Activated CD8-positive, alpha-beta T cell treated with anti-CD3 and anti-CD28 coated beads, Interleukin-2, amount 10 ng/mL, durations not matched to agents 7 days and 5 days (primary cell): ENCODE measurements at regions of chr21 and their contacts with region 1.

Region 1: DNA sequence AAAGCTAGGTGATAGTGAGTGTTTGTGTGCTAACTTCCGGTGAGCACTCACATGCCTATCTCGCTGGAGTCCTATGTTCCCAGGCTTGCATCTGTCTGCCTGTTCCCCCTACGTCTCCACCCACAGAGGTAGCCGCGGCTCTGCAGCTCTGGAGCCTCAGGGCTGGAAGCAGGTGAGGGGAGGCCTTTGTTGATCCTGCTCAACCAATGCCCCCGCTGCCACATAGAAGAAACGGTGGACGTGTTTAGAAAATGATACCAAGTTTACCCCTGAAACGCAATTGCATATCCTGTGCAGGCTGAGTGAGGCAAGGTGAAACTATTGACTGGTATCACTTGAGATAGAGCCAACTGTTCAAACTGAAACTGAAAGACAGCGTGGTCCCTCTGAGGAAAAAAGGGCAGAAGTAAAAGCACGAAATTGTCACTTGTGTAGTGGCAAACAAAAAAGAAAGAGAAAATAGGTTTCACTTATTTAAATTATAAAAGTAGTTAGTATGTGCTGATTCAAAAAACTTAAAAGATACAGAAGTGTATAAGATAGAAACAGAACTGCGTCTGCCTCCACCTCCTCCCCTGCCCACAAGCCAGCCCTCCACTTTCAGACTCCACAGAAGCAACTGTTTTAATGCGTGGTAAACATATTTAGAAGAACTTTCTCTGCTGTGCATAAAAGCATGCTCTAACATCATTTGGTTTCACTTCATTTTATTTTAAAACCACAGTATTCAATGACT is 38.6 kb upstream of the ETS2 start:
- DNase-seq: peak; percentile 82
- ATAC-seq: peak; percentile 96
- H3K4me3 Mint-ChIP-seq: peak overlapping the region; percentile 83
- H3K27ac Mint-ChIP-seq: peak overlapping the region; percentile 100
- H3K4me1 Mint-ChIP-seq: peaks cover 36% of the 10 kb centered on the region
- H3K27me3 Mint-ChIP-seq: no peaks in the 10 kb centered on the region

Region 2: DNA sequence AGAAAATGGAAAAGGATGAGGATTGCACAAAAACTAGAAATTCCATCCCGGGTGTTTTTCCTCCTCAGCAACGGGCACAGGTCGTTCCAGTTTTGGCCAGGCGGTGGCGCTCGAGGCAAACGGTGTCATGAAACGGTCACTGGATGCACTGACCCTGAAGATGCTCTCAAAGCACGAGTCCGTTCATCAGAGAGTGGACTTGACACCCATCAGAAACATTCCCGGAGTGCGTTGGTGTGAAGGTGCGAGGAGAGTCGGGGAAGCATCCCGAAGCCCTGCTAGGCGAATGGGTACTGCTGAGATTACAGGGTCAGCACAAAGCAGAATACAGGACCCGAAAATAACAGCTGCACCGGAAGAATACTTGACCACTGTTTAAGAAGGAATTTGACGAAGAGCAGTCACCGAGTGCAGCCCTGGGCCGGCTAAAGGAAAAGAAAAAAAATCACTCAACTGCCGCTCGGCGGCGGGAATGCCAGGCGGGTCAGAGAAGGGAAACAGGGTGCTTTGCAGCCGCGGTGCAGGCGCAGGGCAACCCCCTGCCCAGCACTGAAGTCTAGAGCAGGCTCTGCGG is 33.1 kb before region 1 on chr21:
- CTCF ChIA-PET with region 1: interaction called, 17 read pairs
- POLR2A ChIA-PET with region 1: no interaction called
- DNase-seq: peak; percentile 72
- ATAC-seq: peak; percentile 68
- H3K4me3 Mint-ChIP-seq: peak overlapping the region; percentile 61
- H3K27ac Mint-ChIP-seq: no peak overlapping the region
- H3K4me1 Mint-ChIP-seq: peaks cover 11% of the 10 kb centered on the region
- H3K27me3 Mint-ChIP-seq: peaks cover 23% of the 10 kb centered on the region

Region 3: DNA sequence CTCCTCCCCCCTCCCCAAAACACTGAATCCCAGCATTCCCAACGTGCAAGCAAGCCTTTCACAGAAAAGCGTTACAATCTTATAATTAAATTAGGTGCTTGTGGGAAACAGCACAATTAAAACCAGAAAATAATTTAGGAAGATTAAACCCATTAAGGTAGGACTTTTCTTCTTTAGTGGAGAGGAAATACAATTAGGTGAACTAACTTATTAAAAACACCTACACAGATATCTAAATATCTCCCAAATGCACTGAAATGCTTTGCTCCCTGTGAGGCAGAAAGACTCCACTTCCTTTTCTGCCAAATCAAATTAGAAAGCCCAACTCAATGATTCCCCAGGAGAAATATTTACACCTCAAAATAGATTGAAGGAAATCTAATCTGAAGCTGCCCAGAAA is 22.3 kb before region 1 on chr21:
- CTCF ChIA-PET with region 1: no interaction called
- POLR2A ChIA-PET with region 1: no interaction called
- DNase-seq: no peak
- ATAC-seq: no peak
- H3K4me3 Mint-ChIP-seq: no peak overlapping the region
- H3K27ac Mint-ChIP-seq: no peak overlapping the region
- H3K4me1 Mint-ChIP-seq: peaks cover 20% of the 10 kb centered on the region
- H3K27me3 Mint-ChIP-seq: no peaks in the 10 kb centered on the region